PC-3 (cell line): ENCODE measurements at regions of chr12 and their contacts with region 1.

Region 1: GRCh38 chr12:115088328-115088994 is 404.5 kb upstream of the TBX3 start:
- DNase-seq: no peak
- ATAC-seq: no peak
- H3K4me3 ChIP-seq: no peak overlapping the region
- H3K27ac ChIP-seq: no peak overlapping the region
- H3K4me1 ChIP-seq: no peaks in the 10 kb centered on the region
- H3K27me3 ChIP-seq: no peaks in the 10 kb centered on the region
- CTCF ChIP-seq: no peak

Region 2: DNA sequence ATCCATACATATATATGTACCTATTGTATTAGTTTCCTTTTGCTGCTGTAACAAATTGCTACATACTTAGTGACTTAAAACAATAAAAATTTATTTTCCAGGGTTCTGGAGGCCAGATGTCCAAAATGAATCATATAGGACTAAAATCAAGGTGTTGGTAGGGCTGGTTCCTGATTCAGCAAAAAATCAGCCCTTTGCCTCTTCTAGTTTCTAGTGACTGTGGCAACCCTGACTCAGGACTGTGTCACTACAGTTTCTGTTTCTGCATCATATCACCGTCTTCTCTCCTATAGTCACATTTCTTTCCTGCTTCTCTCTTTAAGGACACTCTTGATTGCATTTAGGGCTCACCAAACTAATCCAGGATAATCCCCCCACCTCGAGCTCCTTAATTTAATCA is 18.1 kb before region 1 on chr12:
- CTCF ChIA-PET with region 1: no interaction called
- POLR2A ChIA-PET with region 1: no interaction called
- intact Hi-C with region 1: no loop called
- DNase-seq: peak; percentile 88
- ATAC-seq: peak; percentile 96
- H3K4me3 ChIP-seq: no peak overlapping the region
- H3K27ac ChIP-seq: peak overlapping the region; percentile 53
- H3K4me1 ChIP-seq: peaks cover 4% of the 10 kb centered on the region
- H3K27me3 ChIP-seq: no peaks in the 10 kb centered on the region
- CTCF ChIP-seq: no peak

Region 3: DNA sequence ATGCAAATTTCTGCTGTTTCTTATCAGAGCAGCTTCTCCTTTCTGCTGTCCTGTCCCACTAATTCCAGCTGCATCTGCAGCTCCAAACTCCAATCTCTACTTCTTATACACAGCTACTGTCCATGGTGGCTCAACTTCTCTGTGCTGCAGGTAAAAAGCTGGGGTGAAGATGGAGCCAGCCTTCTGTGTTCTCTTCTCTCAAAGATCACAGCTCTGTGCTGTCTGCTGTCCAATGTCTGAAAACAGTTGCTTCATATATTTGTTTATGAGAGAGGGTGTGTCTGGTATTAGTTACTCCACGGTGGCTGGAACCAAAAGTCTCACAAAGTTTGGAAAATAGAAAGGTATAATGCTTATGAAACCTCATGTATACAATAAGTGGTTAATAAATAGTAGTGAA is 41.3 kb after region 1 on chr12:
- CTCF ChIA-PET with region 1: no interaction called
- POLR2A ChIA-PET with region 1: interaction called, 13 read pairs
- intact Hi-C with region 1: no loop called
- DNase-seq: peak; percentile 42
- ATAC-seq: peak; percentile 51
- H3K4me3 ChIP-seq: no peak overlapping the region
- H3K27ac ChIP-seq: no peak overlapping the region
- H3K4me1 ChIP-seq: peaks cover 16% of the 10 kb centered on the region
- H3K27me3 ChIP-seq: no peaks in the 10 kb centered on the region
- CTCF ChIP-seq: no peak